CD8-positive, alpha-beta T cell (primary cell): ENCODE measurements at regions of chr18 and their contacts with region 1.

Region 1: DNA sequence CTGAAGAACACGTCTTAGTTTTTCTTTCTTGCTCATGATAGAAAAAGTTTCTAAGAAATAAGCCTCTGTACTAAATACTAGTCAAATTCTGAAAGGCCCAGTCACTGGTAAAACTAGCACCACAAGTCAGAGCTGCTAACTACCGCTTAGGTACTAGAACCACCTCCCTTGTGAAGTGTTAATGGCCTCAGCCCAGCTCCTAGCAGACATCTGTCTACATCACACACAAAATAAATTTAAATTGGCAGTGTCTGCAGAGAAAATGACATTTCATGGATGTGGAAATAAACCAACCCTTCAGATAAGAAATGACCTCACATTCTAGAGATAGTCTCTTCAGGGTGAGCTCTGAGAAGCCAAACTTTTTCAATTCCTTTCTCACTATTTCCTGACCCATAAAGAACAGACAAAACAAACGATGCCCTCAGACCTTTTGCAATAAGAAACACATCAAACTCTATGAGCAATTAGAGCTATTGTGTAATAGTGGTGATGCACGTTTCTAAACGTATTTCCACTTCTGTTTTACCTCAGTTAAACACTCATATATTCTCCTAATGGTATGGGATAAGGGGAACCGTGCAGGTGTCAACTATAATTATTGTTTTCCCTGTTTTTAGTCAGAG is 70.3 kb upstream of the DSG1 start:
- DNase-seq: no peak
- ATAC-seq: no peak
- H3K4me3 ChIP-seq: no peak overlapping the region
- H3K4me3 Mint-ChIP-seq: no peak overlapping the region
- H3K27ac ChIP-seq: no peak overlapping the region
- H3K27ac Mint-ChIP-seq: no peak overlapping the region
- H3K4me1 ChIP-seq: no peaks in the 10 kb centered on the region
- H3K4me1 Mint-ChIP-seq: no peaks in the 10 kb centered on the region
- H3K27me3 ChIP-seq: no peaks in the 10 kb centered on the region
- H3K27me3 Mint-ChIP-seq: no peaks in the 10 kb centered on the region
- CTCF ChIP-seq: no peak

Region 2: DNA sequence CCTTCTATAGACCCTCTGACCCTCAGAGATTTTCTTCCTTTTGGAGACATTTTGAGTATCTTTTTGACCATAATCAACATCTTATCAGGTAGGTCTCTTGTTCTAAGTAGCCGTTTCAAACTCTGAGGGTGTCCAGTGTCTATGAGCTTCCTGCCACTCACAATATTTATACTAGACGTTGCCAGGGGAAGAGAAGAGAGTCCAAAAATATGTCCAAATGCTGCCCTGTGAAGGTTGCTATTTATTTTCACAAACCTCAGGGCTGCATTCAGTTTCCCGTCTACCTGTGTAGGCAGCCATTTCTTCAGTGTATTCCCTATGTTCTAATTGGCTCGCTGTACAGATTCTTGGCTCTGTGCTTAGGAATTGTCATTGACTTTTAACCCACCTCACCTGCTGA is 69.3 kb after region 1 on chr18:
- CTCF ChIA-PET with region 1: no interaction called
- POLR2A ChIA-PET with region 1: no interaction called
- intact Hi-C with region 1: loop called in 1 of 2 experiments (anchors 2 kb)
- DNase-seq: no peak
- ATAC-seq: no peak
- H3K4me3 ChIP-seq: no peak overlapping the region
- H3K4me3 Mint-ChIP-seq: no peak overlapping the region
- H3K27ac ChIP-seq: no peak overlapping the region
- H3K27ac Mint-ChIP-seq: no peak overlapping the region
- H3K4me1 ChIP-seq: no peaks in the 10 kb centered on the region
- H3K4me1 Mint-ChIP-seq: no peaks in the 10 kb centered on the region
- H3K27me3 ChIP-seq: no peaks in the 10 kb centered on the region
- H3K27me3 Mint-ChIP-seq: no peaks in the 10 kb centered on the region
- CTCF ChIP-seq: no peak